OCI-LY7 (cell line): ENCODE measurements at regions of chr12 and their contacts with region 1.

Region 1: GRCh38 chr12:44875954-44876553 is at the start of gene NELL2:
- DNase-seq: peak; percentile 24
- H3K4me3 ChIP-seq: peak within 1 kb of the TSS; percentile 71
- H3K27ac ChIP-seq: no peak within 1 kb of the TSS
- H3K4me1 ChIP-seq: peaks cover 3% of the 10 kb centered on the region
- CTCF ChIP-seq: no peak
- total RNA-seq, gene NELL2: 1.8 and 11.1 TPM in 2 replicates

Region 2: DNA sequence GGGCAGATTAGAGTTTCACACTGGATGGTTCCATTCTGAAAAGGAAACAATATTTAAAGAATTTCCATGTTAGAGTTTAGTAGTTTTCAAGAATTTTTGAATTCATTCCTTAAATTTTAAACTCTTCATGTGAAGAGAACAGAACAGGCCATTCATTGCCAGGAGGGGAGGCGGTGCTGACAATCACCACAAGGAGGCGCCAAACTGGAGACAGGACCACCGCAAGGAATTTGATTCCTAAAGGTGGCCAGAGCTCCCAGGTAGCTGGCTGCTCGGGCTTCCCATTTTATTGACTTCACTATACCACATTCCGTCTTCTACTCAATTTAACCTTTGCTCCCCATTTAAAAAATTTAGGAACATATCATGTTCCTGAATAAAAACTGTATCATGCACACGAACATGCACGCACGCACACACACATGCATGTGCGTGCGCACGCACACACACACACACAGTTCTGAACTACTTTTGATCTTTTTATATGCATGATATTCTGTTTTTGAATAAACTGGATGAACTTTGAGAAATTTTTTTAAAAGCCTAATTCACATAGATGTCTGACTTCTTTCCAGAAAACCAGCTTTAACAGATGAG is 101.1 kb before region 1 on chr12:
- CTCF ChIA-PET with region 1: no interaction called
- POLR2A ChIA-PET with region 1: no interaction called
- intact Hi-C with region 1: loop called (anchors 5 kb)
- DNase-seq: peak; percentile 47
- H3K4me3 ChIP-seq: no peak overlapping the region
- H3K27ac ChIP-seq: no peak overlapping the region
- H3K4me1 ChIP-seq: no peaks in the 10 kb centered on the region
- CTCF ChIP-seq: peak; percentile 93

Region 3: DNA sequence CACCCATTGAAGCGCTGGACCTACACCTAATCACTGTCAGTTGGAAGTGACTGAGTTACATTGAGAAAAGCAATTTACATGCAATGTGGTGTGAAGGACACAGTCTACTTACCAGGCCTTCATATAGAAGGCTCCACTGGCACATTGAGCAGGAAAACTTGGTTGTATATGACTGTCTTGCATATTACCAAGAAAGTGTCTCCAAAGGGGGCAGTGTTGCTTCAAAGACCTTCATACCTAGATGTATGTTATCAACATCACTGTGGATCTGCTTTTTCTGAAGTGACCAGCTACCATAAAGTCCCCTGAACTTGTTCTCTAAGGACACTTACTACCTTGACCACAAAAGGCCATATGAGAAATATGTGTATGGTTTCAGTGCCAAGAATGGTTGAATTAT is 64.0 kb before region 1 on chr12:
- CTCF ChIA-PET with region 1: interaction called, 3 read pairs
- POLR2A ChIA-PET with region 1: interaction called, 5 read pairs
- intact Hi-C with region 1: loop called (anchors 5 kb)
- DNase-seq: peak; percentile 77
- H3K4me3 ChIP-seq: no peak overlapping the region
- H3K27ac ChIP-seq: no peak overlapping the region
- H3K4me1 ChIP-seq: no peaks in the 10 kb centered on the region
- CTCF ChIP-seq: peak; percentile 82